ENCODE measurements at regions of chr2 and their contacts with region 1.

Region 1: GRCh38 chr2:103196802-103197201 is 435.0 kb downstream of the TMEM182 start:
- DNase-seq: no peak
- ATAC-seq: no peak
- H3K4me3 Mint-ChIP-seq: no peak overlapping the region
- H3K27ac Mint-ChIP-seq: no peak overlapping the region
- H3K4me1 Mint-ChIP-seq: no peaks in the 10 kb centered on the region
- H3K27me3 Mint-ChIP-seq: no peaks in the 10 kb centered on the region

Region 2: GRCh38 chr2:103213028-103213542 is 16.3 kb after region 1 on chr2:
- CTCF ChIA-PET with region 1: no interaction called
- POLR2A ChIA-PET with region 1: no interaction called
- intact Hi-C with region 1: loop called in 1 of 2 experiments (anchors 1 kb)
- DNase-seq: no peak
- ATAC-seq: no peak
- H3K4me3 Mint-ChIP-seq: no peak overlapping the region
- H3K27ac Mint-ChIP-seq: no peak overlapping the region
- H3K4me1 Mint-ChIP-seq: no peaks in the 10 kb centered on the region
- H3K27me3 Mint-ChIP-seq: no peaks in the 10 kb centered on the region

Region 3: DNA sequence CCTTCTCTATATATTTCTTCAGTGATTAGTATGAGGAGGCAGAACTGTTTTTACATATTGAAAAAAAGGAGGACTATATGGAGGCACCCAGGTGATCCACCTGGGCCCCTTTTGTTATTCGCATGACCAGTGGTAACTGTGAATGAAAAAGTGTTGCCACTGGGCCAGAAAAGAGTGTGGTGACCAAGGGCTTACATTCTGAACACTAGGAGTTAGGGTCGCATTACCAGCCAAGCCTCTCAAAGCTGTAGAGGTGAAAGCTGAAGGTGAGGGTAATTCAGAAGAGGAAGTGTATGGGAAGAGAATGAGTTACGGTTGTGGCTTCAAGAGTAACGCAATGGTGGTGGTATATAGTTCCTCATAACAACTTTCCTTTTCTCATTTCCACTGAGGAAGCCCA is 52.7 kb after region 1 on chr2:
- CTCF ChIA-PET with region 1: no interaction called
- POLR2A ChIA-PET with region 1: no interaction called
- intact Hi-C with region 1: no loop called
- DNase-seq: no peak
- ATAC-seq: no peak
- H3K4me3 Mint-ChIP-seq: no peak overlapping the region
- H3K27ac Mint-ChIP-seq: no peak overlapping the region
- H3K4me1 Mint-ChIP-seq: no peaks in the 10 kb centered on the region
- H3K27me3 Mint-ChIP-seq: no peaks in the 10 kb centered on the region